CD4-positive, alpha-beta T cell (primary cell): ENCODE measurements at regions of chr19 and their contacts with region 1.

Region 1: DNA sequence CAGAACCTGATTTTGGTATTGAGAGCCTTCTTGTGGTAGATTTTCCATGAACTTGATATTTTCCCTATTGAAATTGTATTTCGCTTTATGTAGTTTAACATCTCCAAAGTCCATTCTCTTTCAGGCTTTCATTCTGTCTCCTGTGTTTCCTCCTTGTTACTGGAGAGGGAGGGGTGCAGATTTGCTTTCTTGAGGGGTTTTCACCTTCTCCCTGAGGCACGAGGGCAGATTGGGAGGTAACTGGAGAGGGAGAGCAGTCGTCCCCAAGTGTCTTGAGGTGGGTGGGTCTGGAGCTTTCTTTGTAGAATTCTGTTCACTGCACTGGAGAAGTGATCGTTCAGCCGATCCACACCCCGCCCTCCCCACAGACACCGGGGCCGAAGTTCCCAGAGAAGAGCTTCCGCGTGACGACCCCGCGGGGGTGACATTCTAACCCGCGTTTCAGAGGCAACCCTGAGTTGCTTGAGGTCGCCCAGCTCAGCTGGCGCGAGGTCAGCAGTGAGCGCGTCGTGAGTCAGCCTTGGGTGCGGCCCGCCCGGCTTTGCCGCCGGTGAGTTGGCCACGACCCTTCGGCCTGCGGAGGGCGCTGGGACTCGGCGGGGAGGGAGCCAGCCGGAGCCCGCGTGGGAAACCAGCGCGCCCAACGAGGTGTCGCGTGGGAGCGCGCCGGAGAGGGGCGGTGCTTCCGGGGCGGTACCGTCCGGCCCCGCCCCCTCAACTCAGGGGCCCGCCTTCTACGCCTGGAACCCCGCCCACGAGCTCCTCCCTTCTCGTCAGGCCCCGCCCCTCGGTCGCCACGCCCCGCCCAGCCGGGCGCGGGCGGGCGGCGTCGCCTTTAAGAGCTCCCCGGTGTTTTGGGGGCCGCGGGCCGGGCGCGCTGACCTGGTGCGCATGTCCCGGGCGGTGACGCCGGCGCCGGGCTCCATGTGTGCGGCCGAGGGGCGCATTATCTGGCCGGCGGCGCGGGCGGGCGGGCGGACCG is at the start of gene GATAD2A:
- DNase-seq: peak; percentile 84 to 96 (median 90)
- ATAC-seq: peak; percentile 84
- H3K4me3 ChIP-seq: peak within 1 kb of the TSS; percentile 61
- H3K4me3 Mint-ChIP-seq: peak within 1 kb of the TSS; percentile 96
- H3K27ac ChIP-seq: peak within 1 kb of the TSS; percentile 71 to 72
- H3K27ac Mint-ChIP-seq: peak within 1 kb of the TSS; percentile 90
- H3K4me1 ChIP-seq: peaks cover 46% of the 10 kb centered on the region
- H3K4me1 Mint-ChIP-seq: peaks cover 70% of the 10 kb centered on the region
- H3K27me3 ChIP-seq: no peaks in the 10 kb centered on the region
- H3K27me3 Mint-ChIP-seq: no peaks in the 10 kb centered on the region
- CTCF ChIP-seq: peak; percentile 49
- total RNA-seq, gene GATAD2A: 104 to 107 TPM

Region 2: GRCh38 chr19:17555480-17555928 is 1849.7 kb before region 1 on chr19 and contains the start of gene COLGALT1:
- CTCF ChIA-PET with region 1: no interaction called
- POLR2A ChIA-PET with region 1: no interaction called
- intact Hi-C with region 1: loop called in 1 of 2 experiments (anchors 5 kb)
- DNase-seq: peak; percentile 94 to 100 (median 98)
- ATAC-seq: peak; percentile 98
- H3K4me3 ChIP-seq: peak within 1 kb of the TSS; percentile 94
- H3K4me3 Mint-ChIP-seq: peak within 1 kb of the TSS; percentile 87
- H3K27ac ChIP-seq: peak within 1 kb of the TSS in 1 of 2 donors; percentile 7
- H3K27ac Mint-ChIP-seq: peak within 1 kb of the TSS; percentile 67
- H3K4me1 ChIP-seq: peaks cover 24% of the 10 kb centered on the region
- H3K4me1 Mint-ChIP-seq: peaks cover 21% of the 10 kb centered on the region
- H3K27me3 ChIP-seq: no peaks in the 10 kb centered on the region
- H3K27me3 Mint-ChIP-seq: no peaks in the 10 kb centered on the region
- CTCF ChIP-seq: no peak
- total RNA-seq, gene COLGALT1: 30.3 to 30.6 TPM

Region 3: GRCh38 chr19:18496167-18496979 is 908.8 kb before region 1 on chr19:
- CTCF ChIA-PET with region 1: no interaction called
- POLR2A ChIA-PET with region 1: no interaction called
- intact Hi-C with region 1: no loop called
- DNase-seq: peak; percentile 30 to 95 (median 54)
- ATAC-seq: peak; percentile 90
- H3K4me3 ChIP-seq: peak overlapping the region; percentile 17
- H3K4me3 Mint-ChIP-seq: peak overlapping the region; percentile 79
- H3K27ac ChIP-seq: peak overlapping the region; percentile 77 to 82
- H3K27ac Mint-ChIP-seq: peak overlapping the region; percentile 90
- H3K4me1 ChIP-seq: peaks cover 100% of the 10 kb centered on the region
- H3K4me1 Mint-ChIP-seq: peaks cover 78% of the 10 kb centered on the region
- H3K27me3 ChIP-seq: no peaks in the 10 kb centered on the region
- H3K27me3 Mint-ChIP-seq: no peaks in the 10 kb centered on the region
- CTCF ChIP-seq: no peak

Region 4: GRCh38 chr19:19361075-19361594 is 44.0 kb before region 1 on chr19:
- CTCF ChIA-PET with region 1: interaction called, 9 read pairs
- POLR2A ChIA-PET with region 1: interaction called, 40 read pairs
- intact Hi-C with region 1: loop called (anchors 2 kb)
- DNase-seq: peak; percentile 31 to 88 (median 60)
- ATAC-seq: peak; percentile 57
- H3K4me3 ChIP-seq: no peak overlapping the region
- H3K4me3 Mint-ChIP-seq: peak overlapping the region; percentile 57
- H3K27ac ChIP-seq: no peak overlapping the region
- H3K27ac Mint-ChIP-seq: peak overlapping the region; percentile 75
- H3K4me1 ChIP-seq: peaks cover 45% of the 10 kb centered on the region
- H3K4me1 Mint-ChIP-seq: peaks cover 42% of the 10 kb centered on the region
- H3K27me3 ChIP-seq: no peaks in the 10 kb centered on the region
- H3K27me3 Mint-ChIP-seq: no peaks in the 10 kb centered on the region
- CTCF ChIP-seq: peak; percentile 79

Region 5: GRCh38 chr19:19372656-19373416 is 32.3 kb before region 1 on chr19:
- CTCF ChIA-PET with region 1: no interaction called
- POLR2A ChIA-PET with region 1: interaction called, 17 read pairs
- intact Hi-C with region 1: no loop called
- DNase-seq: peak in 6 of 14 experiments; percentile 18 to 86 (median 62)
- ATAC-seq: peak; percentile 83
- H3K4me3 ChIP-seq: no peak overlapping the region
- H3K4me3 Mint-ChIP-seq: peak overlapping the region; percentile 43
- H3K27ac ChIP-seq: peak overlapping the region in 1 of 2 donors; percentile 81
- H3K27ac Mint-ChIP-seq: peak overlapping the region; percentile 85
- H3K4me1 ChIP-seq: peaks cover 17% of the 10 kb centered on the region
- H3K4me1 Mint-ChIP-seq: peaks cover 12% of the 10 kb centered on the region
- H3K27me3 ChIP-seq: no peaks in the 10 kb centered on the region
- H3K27me3 Mint-ChIP-seq: no peaks in the 10 kb centered on the region
- CTCF ChIP-seq: no peak

Region 6: GRCh38 chr19:19425170-19425875 is 20.2 kb after region 1 on chr19:
- CTCF ChIA-PET with region 1: no interaction called
- POLR2A ChIA-PET with region 1: interaction called, 10 read pairs
- intact Hi-C with region 1: no loop called
- DNase-seq: no peak
- ATAC-seq: no peak
- H3K4me3 ChIP-seq: no peak overlapping the region
- H3K4me3 Mint-ChIP-seq: no peak overlapping the region
- H3K27ac ChIP-seq: no peak overlapping the region
- H3K27ac Mint-ChIP-seq: peak overlapping the region; percentile 20
- H3K4me1 ChIP-seq: peaks cover 88% of the 10 kb centered on the region
- H3K4me1 Mint-ChIP-seq: peaks cover 86% of the 10 kb centered on the region
- H3K27me3 ChIP-seq: no peaks in the 10 kb centered on the region
- H3K27me3 Mint-ChIP-seq: no peaks in the 10 kb centered on the region
- CTCF ChIP-seq: no peak

Region 7: GRCh38 chr19:19459707-19460251 is 54.6 kb after region 1 on chr19:
- CTCF ChIA-PET with region 1: interaction called, 5 read pairs
- POLR2A ChIA-PET with region 1: interaction called, 36 read pairs
- intact Hi-C with region 1: no loop called
- DNase-seq: peak; percentile 32 to 89 (median 62)
- ATAC-seq: peak; percentile 68
- H3K4me3 ChIP-seq: peak overlapping the region; percentile 50
- H3K4me3 Mint-ChIP-seq: peak overlapping the region; percentile 89
- H3K27ac ChIP-seq: peak overlapping the region; percentile 88 to 91
- H3K27ac Mint-ChIP-seq: peak overlapping the region; percentile 95
- H3K4me1 ChIP-seq: peaks cover 90% of the 10 kb centered on the region
- H3K4me1 Mint-ChIP-seq: peaks cover 75% of the 10 kb centered on the region
- H3K27me3 ChIP-seq: no peaks in the 10 kb centered on the region
- H3K27me3 Mint-ChIP-seq: no peaks in the 10 kb centered on the region
- CTCF ChIP-seq: no peak

Region 8: GRCh38 chr19:19515764-19516519 is 110.8 kb after region 1 on chr19 and contains the start of gene NDUFA13:
- CTCF ChIA-PET with region 1: no interaction called
- POLR2A ChIA-PET with region 1: interaction called, 14 read pairs
- intact Hi-C with region 1: no loop called
- DNase-seq: peak; percentile 84 to 97 (median 92)
- ATAC-seq: peak; percentile 87
- H3K4me3 ChIP-seq: peak within 1 kb of the TSS; percentile 77
- H3K4me3 Mint-ChIP-seq: peak within 1 kb of the TSS; percentile 94
- H3K27ac ChIP-seq: peak within 1 kb of the TSS; percentile 76 to 87
- H3K27ac Mint-ChIP-seq: peak within 1 kb of the TSS; percentile 86
- H3K4me1 ChIP-seq: peaks cover 46% of the 10 kb centered on the region
- H3K4me1 Mint-ChIP-seq: peaks cover 32% of the 10 kb centered on the region
- H3K27me3 ChIP-seq: no peaks in the 10 kb centered on the region
- H3K27me3 Mint-ChIP-seq: no peaks in the 10 kb centered on the region
- CTCF ChIP-seq: no peak
- total RNA-seq, gene NDUFA13: 145 to 156 TPM

Region 9: GRCh38 chr19:19696386-19696785 is 291.2 kb after region 1 on chr19:
- CTCF ChIA-PET with region 1: no interaction called
- POLR2A ChIA-PET with region 1: no interaction called
- intact Hi-C with region 1: no loop called
- DNase-seq: no peak
- ATAC-seq: no peak
- H3K4me3 ChIP-seq: no peak overlapping the region
- H3K4me3 Mint-ChIP-seq: no peak overlapping the region
- H3K27ac ChIP-seq: no peak overlapping the region
- H3K27ac Mint-ChIP-seq: no peak overlapping the region
- H3K4me1 ChIP-seq: no peaks in the 10 kb centered on the region
- H3K4me1 Mint-ChIP-seq: no peaks in the 10 kb centered on the region
- H3K27me3 ChIP-seq: no peaks in the 10 kb centered on the region
- H3K27me3 Mint-ChIP-seq: no peaks in the 10 kb centered on the region
- CTCF ChIP-seq: no peak